ENCODE measurements at regions of chr6 and their contacts with region 1.

Region 1: DNA sequence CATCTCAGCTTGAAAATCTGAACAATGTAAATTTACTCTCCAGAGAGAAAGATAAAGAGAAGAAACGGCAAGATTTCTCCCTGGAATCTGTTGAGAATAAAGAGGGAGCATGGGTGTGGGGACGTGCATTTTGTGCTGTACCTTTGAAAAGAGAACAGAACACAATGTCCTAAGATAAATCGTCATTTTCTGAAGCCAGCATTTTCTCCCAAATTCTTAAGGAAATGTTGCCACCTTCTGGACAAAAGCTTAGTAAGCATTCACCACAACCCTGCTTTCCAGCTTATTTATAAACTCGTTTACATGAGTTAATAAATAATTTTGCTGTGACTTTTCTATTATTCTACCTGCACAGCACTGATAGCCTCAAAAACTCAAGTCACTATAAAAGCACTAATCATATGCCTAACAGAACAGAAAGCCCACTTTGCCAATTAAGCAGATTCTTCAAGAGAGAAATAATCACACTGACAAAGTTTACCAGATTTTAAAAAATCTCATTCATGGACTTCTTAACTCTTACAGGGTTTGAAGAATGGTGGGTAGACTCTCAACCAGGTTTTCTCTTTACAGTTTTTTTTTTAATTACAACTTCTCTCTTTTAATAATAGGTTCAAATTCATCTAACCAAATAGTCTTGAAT is 155.8 kb downstream of the MBOAT1 start:
- DNase-seq: peak; percentile 52
- ATAC-seq: peak; percentile 54; the same call in 1 of the 2 replicates
- H3K4me3 ChIP-seq: no peak overlapping the region
- H3K27ac ChIP-seq: no peak overlapping the region
- H3K4me1 ChIP-seq: no peaks in the 10 kb centered on the region
- H3K27me3 ChIP-seq: no peaks in the 10 kb centered on the region
- CTCF ChIP-seq: peak; percentile 48 to 74 (median 69)
- POLR2A ChIP-seq: no peak
- RAD21 ChIP-seq: peak; percentile 86

Region 2: DNA sequence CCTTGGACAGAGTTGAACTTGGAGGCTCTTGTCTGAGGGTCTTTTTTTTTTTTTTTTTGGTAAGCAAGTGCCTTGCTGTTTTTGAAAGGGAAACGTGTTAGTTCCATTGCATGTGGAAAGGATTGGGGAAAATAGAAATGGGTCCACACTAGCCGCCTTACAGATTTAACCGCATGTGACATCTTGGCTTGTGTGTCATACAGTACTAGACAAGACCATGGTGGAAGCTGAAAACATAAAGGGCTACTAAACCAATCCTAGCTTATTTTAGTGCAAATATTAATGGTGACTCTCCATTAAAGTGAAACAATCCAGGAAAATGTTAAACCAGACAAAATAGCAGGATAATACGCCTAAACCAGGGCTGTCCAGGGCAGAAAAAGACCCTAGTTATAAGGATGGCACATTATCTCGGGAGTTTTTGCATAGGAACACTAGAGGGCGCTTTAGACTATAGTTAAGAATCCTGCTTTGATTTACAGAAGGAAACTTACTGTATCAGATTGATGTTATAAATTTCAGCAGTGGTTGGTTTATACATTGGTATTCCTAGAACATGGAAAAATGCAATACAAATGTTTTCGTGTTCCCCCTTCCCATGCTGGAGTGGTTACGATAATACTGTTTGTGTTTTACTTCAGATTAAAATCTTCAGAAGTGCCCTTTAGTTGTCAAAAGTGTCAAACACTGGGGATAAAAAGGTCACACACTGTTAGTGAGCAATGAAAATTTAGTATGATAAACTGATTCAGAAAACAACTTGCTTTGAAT is 1732.4 kb before region 1 on chr6:
- CTCF ChIA-PET with region 1: no interaction called
- POLR2A ChIA-PET with region 1: no interaction called
- RAD21 ChIA-PET with region 1: no interaction called
- intact Hi-C with region 1: loop called (anchors 10 kb)
- DNase-seq: peak; percentile 35
- ATAC-seq: peak; percentile 84
- H3K4me3 ChIP-seq: no peak overlapping the region
- H3K27ac ChIP-seq: no peak overlapping the region
- H3K4me1 ChIP-seq: no peaks in the 10 kb centered on the region
- H3K27me3 ChIP-seq: no peaks in the 10 kb centered on the region
- CTCF ChIP-seq: peak; percentile 59 to 83 (median 69)
- POLR2A ChIP-seq: no peak
- RAD21 ChIP-seq: peak; percentile 88

Region 3: GRCh38 chr6:18595774-18596530 is 1460.5 kb before region 1 on chr6:
- CTCF ChIA-PET with region 1: interaction called, 8 read pairs
- POLR2A ChIA-PET with region 1: no interaction called
- RAD21 ChIA-PET with region 1: no interaction called
- intact Hi-C with region 1: loop called (anchors 1 kb)
- DNase-seq: peak; percentile 46
- ATAC-seq: peak; percentile 98
- H3K4me3 ChIP-seq: no peak overlapping the region
- H3K27ac ChIP-seq: no peak overlapping the region
- H3K4me1 ChIP-seq: no peaks in the 10 kb centered on the region
- H3K27me3 ChIP-seq: no peaks in the 10 kb centered on the region
- CTCF ChIP-seq: peak; percentile 71 to 94 (median 93)
- POLR2A ChIP-seq: no peak
- RAD21 ChIP-seq: peak; percentile 94

Region 4: DNA sequence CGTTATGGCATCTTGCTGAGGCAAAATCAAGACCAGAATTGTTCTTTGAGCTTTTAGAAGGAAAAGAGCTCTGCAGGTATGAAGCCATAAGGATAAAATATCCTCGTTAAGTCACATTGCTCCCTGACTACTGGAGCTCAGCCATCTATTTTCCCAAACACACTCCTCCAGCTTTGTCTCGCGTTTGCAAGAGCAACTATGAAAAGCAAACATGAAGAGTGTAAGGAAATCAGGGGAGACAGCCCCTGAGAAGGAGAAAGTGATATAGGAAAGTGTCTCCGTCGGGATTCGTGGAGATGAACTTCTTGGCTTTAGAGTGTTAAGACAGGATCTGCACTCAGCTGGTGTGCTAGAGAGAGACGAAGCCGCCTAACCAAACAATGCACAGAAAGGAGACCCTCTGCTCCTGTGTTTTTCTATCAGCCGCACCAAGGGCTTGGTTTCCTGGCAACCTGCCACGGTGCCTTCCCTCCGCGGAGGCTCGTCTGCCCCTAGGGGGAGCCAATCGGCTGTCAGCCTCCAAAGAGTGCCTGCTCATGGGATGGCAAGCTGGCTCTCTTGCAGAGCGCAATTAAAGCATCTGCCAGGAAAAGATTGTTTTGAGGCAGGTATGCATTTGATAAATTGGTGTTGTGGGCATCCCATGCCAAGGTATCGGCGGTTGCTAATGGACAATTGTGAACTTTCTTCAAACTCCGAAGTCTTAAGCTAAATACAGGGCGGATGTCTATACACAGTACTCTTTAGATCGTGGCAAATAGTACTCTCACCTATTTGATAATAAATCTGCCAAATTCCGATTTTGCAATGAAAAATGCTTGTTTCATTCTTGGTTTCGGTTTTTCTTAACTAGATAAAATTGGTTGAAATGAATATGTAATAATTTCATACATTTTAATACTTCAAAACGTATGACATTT is 1066.2 kb before region 1 on chr6:
- CTCF ChIA-PET with region 1: interaction called, 5 read pairs
- POLR2A ChIA-PET with region 1: no interaction called
- RAD21 ChIA-PET with region 1: no interaction called
- intact Hi-C with region 1: loop called (anchors 10 kb)
- DNase-seq: peak; percentile 55
- ATAC-seq: peak; percentile 96
- H3K4me3 ChIP-seq: peak overlapping the region in 1 of 2 experiments; percentile 6; a peak in 1 of 4 replicates
- H3K27ac ChIP-seq: no peak overlapping the region
- H3K4me1 ChIP-seq: peaks cover 0 to 6% of the 10 kb centered on the region in 2 experiments; a peak in 1 of 4 replicates
- H3K27me3 ChIP-seq: no peaks in the 10 kb centered on the region
- CTCF ChIP-seq: peak; percentile 45 to 78 (median 76); a peak in 5 of 6 replicates
- POLR2A ChIP-seq: no peak
- RAD21 ChIP-seq: peak; percentile 66

Region 5: GRCh38 chr6:19024737-19025136 is 1031.7 kb before region 1 on chr6:
- CTCF ChIA-PET with region 1: interaction called, 21 read pairs
- POLR2A ChIA-PET with region 1: no interaction called
- RAD21 ChIA-PET with region 1: interaction called in 1 of 2 experiments, 4 read pairs
- intact Hi-C with region 1: loop called (anchors 1 kb)
- DNase-seq: peak; percentile 54
- ATAC-seq: peak; percentile 92
- H3K4me3 ChIP-seq: no peak overlapping the region
- H3K27ac ChIP-seq: no peak overlapping the region
- H3K4me1 ChIP-seq: no peaks in the 10 kb centered on the region
- H3K27me3 ChIP-seq: no peaks in the 10 kb centered on the region
- CTCF ChIP-seq: peak; percentile 61 to 73 (median 66); a peak in 5 of 6 replicates
- POLR2A ChIP-seq: no peak
- RAD21 ChIP-seq: peak; percentile 87

Region 6: DNA sequence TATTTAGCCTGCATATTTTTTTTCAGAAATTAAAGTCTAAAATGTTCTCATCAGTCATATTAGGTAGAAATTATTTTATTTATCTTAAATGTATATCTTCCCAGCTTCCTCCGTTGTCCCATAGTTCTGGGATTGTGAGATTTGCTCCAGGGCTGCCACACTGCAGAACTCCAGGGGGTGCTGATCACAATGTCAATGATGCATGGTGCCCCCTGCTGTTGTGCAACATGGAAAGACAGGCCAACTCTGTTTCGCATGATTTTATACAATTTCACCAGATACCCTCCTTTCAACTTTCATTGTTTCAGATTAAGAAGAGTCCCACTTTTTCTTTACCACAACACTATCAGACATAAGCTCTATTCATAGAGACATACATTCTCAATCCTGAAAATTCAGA is 183.4 kb before region 1 on chr6:
- CTCF ChIA-PET with region 1: interaction called, 3 read pairs
- POLR2A ChIA-PET with region 1: no interaction called
- RAD21 ChIA-PET with region 1: no interaction called
- intact Hi-C with region 1: loop called (anchors 5 kb)
- DNase-seq: no peak
- ATAC-seq: peak; percentile 80
- H3K4me3 ChIP-seq: no peak overlapping the region
- H3K27ac ChIP-seq: no peak overlapping the region
- H3K4me1 ChIP-seq: no peaks in the 10 kb centered on the region; a peak in 1 of 4 replicates
- H3K27me3 ChIP-seq: peaks cover 6% of the 10 kb centered on the region; the same call in 1 of the 2 replicates
- CTCF ChIP-seq: peak; percentile 57 to 97 (median 59)
- POLR2A ChIP-seq: no peak
- RAD21 ChIP-seq: peak; percentile 62

Region 7: GRCh38 chr6:20292905-20293304 is 236.4 kb after region 1 on chr6:
- CTCF ChIA-PET with region 1: no interaction called
- POLR2A ChIA-PET with region 1: no interaction called
- RAD21 ChIA-PET with region 1: no interaction called
- intact Hi-C with region 1: no loop called
- DNase-seq: no peak
- ATAC-seq: no peak
- H3K4me3 ChIP-seq: no peak overlapping the region
- H3K27ac ChIP-seq: no peak overlapping the region
- H3K4me1 ChIP-seq: peaks cover 3 to 10% of the 10 kb centered on the region in 2 experiments; a peak in 3 of 4 replicates
- H3K27me3 ChIP-seq: no peaks in the 10 kb centered on the region
- CTCF ChIP-seq: no peak
- POLR2A ChIP-seq: no peak
- RAD21 ChIP-seq: no peak